ENCODE measurements at regions of chr3 and their contacts with region 1.

Region 1: GRCh38 chr3:101724329-101725193 is at the start of gene CEP97:
- DNase-seq: peak; percentile 85
- H3K4me3 Mint-ChIP-seq: peak within 1 kb of the TSS; percentile 94
- H3K27ac Mint-ChIP-seq: peak within 1 kb of the TSS; percentile 96
- H3K4me1 Mint-ChIP-seq: peaks cover 54% of the 10 kb centered on the region
- H3K27me3 Mint-ChIP-seq: no peaks in the 10 kb centered on the region
- total RNA-seq, gene CEP97: 20.2 and 20.6 TPM in 2 replicates

Region 2: DNA sequence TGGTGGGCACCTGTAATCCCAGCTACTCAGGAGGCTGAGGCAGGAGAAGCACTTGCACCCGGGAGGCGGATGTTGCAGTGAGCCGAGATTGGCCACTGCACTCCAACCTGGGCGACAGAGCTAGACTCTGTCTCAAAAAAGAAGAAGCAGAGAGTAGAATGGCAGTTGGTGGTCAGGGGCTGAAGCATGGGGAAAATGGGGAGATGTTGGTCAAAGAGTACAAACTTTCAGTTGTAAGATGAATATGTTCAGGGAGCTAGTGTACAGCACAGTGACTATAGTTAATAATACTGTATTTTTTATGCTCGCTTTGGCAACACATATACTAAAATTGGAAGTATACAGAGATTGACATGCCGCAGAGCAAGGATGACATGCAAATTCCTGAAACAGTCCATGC is 109.0 kb before region 1 on chr3:
- intact Hi-C with region 1: no loop called
- DNase-seq: no peak
- H3K4me3 Mint-ChIP-seq: no peak overlapping the region
- H3K27ac Mint-ChIP-seq: no peak overlapping the region
- H3K4me1 Mint-ChIP-seq: no peaks in the 10 kb centered on the region
- H3K27me3 Mint-ChIP-seq: no peaks in the 10 kb centered on the region

Region 3: DNA sequence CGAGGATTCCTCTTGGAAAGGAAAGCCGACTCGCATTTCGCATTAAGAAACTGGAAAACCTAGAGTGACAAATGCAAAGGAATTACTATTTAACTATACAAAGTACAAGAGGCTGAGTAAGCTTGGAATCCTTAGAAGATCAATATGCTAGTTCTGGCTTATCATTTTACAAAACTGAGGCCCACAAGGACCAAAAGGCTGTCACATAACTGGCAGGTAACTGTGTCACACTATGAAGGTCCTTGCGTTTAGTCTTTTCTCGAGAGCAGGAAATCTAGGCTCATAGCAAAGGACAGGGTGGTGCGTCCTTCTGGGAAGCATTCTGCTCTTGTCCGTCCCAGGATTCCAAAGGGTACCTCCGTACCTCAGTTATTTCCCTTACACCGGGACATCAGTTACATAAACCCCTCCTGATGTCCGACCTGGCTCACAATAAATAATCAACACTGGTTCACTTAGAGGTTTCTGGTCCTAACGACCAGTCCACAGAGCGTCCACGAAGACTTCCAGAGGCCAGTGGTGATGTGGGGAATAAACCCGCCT is 38.6 kb before region 1 on chr3:
- intact Hi-C with region 1: loop called (anchors 1 kb)
- DNase-seq: no peak
- H3K4me3 Mint-ChIP-seq: peak overlapping the region; percentile 99
- H3K27ac Mint-ChIP-seq: peak overlapping the region; percentile 97
- H3K4me1 Mint-ChIP-seq: peaks cover 29% of the 10 kb centered on the region
- H3K27me3 Mint-ChIP-seq: no peaks in the 10 kb centered on the region

Region 4: DNA sequence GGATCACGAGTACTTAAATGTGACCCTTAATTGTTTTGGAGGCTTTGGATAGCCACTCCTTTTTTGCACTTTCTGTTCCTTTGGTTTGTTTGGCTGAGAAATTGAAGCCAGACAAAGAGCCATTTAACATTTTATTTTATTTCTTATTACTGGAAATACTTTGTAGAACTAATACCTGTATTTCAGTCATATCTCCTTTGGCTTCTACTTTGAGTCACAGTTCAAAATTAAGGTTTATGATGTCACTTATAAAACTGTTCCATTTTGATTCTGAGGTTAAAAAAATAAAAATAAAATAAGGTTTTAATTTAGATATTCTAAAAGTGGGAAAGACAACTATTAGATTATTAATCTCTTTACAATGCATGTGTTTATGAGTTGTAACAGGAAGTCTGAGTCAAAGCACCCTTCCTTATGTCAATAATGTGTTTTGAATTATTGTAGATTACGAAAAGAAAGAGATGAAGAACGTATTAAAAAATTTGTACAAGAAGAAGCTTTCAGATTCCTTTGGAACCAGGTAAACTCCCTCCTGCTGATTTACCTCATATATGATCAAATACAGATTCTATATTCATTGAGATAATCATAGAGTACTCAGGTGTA is 37.6 kb after region 1 on chr3:
- intact Hi-C with region 1: no loop called
- DNase-seq: no peak
- H3K4me3 Mint-ChIP-seq: no peak overlapping the region
- H3K27ac Mint-ChIP-seq: no peak overlapping the region
- H3K4me1 Mint-ChIP-seq: peaks cover 19% of the 10 kb centered on the region
- H3K27me3 Mint-ChIP-seq: no peaks in the 10 kb centered on the region

Measured in activated T-helper 1 cell treated with anti-CD3 and anti-CD28 coated beads, Interleukin-12 subunit alpha, Interleukin-12 subunit beta, Interleukin-2, Interleukin-4 antibody, amounts not matched to agents 30 ng/mL and 10 ng/mL and 1 ng/mL, durations not matched to agents 14 hours and 24 hours and 36 hours (primary cell).